ENCODE measurements at regions of chr14 and their contacts with region 1.

Region 1: DNA sequence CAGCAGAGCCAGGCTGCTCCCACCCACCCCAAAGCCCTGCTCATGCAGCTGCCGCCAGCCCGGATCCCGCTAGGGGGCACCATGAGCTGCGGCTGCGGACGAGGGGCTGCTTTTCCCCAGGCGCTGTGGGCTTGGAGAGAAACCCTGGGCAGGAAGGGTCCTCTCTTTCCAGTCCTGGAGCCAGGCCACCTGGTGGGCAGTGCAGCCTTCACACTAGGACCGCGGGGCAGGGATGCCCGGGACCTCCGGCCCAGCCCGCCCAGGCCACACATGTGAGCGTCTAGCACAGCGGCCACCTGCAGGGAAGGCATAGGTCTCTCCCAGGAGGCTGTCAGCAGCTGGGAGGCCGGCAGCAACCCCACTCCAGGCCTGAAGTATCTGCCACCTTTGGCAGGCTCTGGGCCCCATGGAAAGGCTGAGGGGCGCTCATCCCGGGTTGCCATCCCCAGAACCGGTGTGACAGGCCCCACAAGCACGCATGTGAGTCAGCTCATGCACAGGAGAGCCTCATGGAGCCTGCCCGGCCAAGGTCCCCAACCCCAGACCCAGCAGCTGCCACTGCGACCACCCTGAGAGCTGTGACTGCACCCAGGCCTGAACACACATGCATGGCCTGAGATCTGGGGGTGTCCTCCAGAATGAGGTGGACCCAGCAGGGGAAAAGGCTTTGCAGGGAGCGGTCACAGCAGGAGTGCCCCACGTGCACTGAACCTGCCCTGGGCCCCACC is 280.0 kb upstream of the RTL1 start:
- DNase-seq: peak; percentile 41
- H3K4me3 ChIP-seq: no peak overlapping the region
- H3K27ac ChIP-seq: no peak overlapping the region
- H3K4me1 ChIP-seq: no peaks in the 10 kb centered on the region
- CTCF ChIP-seq: peak; percentile 73

Region 2: GRCh38 chr14:101350691-101351090 is 167.2 kb after region 1 on chr14:
- CTCF ChIA-PET with region 1: interaction called, 11 read pairs
- POLR2A ChIA-PET with region 1: no interaction called
- intact Hi-C with region 1: no loop called
- DNase-seq: no peak
- H3K4me3 ChIP-seq: no peak overlapping the region
- H3K27ac ChIP-seq: no peak overlapping the region
- H3K4me1 ChIP-seq: no peaks in the 10 kb centered on the region
- CTCF ChIP-seq: no peak